ENCODE measurements at regions of chr20 and their contacts with region 1.

Region 1: DNA sequence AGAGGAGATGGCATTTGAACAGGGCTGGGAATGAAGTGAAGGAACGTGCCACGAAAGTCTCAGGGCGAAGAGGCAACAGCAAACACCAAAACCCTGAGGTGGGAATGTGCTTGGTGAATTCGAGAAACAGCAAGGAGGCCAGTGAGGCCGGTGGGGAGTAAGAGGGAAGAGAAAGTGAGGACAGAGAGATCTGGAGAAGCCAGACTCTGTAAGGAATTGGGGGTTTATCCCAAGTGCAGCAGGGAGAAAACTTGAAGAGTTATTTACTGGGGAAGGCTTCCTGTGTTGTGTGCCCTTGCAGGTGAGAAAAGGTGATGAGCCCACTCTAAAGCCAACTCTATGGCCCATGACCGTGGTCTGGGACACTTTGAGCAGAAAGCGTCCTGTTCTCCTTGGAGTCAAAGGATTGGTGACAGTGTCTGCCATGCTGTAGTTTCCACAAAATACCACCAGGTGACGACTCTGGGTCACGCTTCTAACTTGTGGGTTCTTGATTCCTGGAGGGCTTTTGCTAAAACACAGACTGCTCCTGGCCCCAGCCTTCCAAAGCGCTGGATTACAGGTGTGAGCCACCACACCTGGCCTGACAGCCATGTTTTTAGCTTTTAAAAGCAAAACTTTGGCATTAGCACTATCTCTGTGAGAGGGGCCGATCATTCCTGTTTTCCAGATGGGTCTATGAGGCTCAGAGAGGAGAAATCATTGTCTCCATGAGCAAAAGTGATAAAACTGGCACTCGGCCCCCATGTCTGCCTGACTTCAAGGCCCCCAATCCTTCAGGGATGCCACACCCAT is 18.0 kb upstream of the CSNK2A1 start:
- DNase-seq: peak in 5 of 9 donors; percentile 5 to 30 (median 17)
- ATAC-seq: peak; percentile 63
- H3K4me3 ChIP-seq: no peak overlapping the region
- H3K4me3 Mint-ChIP-seq: no peak overlapping the region
- H3K27ac ChIP-seq: no peak overlapping the region
- H3K27ac Mint-ChIP-seq: peak overlapping the region in 1 of 9 donors; percentile 8
- H3K4me1 ChIP-seq: no peaks in the 10 kb centered on the region
- H3K4me1 Mint-ChIP-seq: no peaks in the 10 kb centered on the region
- H3K27me3 ChIP-seq: no peaks in the 10 kb centered on the region
- H3K27me3 Mint-ChIP-seq: peaks cover 11 to 17% (median 15%) of the 10 kb centered on the region in 5 donors

Region 2: DNA sequence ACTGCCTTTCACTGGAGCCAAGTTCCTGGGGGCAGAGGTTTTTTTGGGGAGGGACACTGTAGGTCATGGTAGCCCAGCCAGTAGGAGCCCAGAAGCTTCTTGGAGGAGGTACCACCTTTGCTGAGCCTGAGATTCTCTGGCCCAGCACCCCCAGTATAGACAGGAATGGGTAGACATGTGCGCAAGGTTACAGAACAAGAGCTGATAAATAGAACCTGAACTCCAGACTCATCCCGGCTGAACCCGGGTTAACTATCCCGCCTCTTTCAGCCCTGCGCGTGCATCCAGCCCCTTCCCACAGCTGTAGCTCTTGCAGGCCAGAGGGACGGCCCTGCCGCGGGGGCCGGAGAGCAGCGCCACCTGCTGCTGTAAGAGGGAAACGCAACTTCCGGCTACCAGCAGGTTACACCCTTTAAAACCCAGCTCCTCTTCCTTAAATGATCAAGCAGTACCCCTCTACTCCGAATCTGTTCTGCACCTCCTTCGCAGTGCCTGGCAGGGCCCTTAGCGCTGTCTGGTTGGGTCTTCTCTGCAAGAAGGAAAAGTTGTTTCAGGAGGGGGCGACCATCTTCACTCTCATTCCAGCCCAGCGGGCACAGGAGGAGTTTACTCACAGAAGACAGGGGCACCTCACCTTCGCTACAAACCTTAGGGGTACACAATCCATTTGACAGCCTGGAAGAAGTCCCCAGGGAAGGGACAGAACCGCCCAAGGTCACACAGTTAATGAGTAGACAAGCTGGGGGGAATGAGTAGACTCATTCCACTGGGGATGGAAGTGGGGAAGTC is 83.9 kb after region 1 on chr20:
- CTCF ChIA-PET with region 1: no interaction called
- POLR2A ChIA-PET with region 1: no interaction called
- intact Hi-C with region 1: loop called in 1 of 2 experiments (anchors 1 kb)
- DNase-seq: peak; percentile 28 to 79 (median 51)
- ATAC-seq: peak; percentile 83
- H3K4me3 ChIP-seq: no peak overlapping the region
- H3K4me3 Mint-ChIP-seq: no peak overlapping the region
- H3K27ac ChIP-seq: no peak overlapping the region
- H3K27ac Mint-ChIP-seq: no peak overlapping the region
- H3K4me1 ChIP-seq: no peaks in the 10 kb centered on the region
- H3K4me1 Mint-ChIP-seq: peaks cover 0 to 18% (median 15%) of the 10 kb centered on the region in 7 donors
- H3K27me3 ChIP-seq: peaks cover 0 to 11% of the 10 kb centered on the region in 2 donors
- H3K27me3 Mint-ChIP-seq: peaks cover 17 to 24% (median 23%) of the 10 kb centered on the region in 5 donors

Region 3: DNA sequence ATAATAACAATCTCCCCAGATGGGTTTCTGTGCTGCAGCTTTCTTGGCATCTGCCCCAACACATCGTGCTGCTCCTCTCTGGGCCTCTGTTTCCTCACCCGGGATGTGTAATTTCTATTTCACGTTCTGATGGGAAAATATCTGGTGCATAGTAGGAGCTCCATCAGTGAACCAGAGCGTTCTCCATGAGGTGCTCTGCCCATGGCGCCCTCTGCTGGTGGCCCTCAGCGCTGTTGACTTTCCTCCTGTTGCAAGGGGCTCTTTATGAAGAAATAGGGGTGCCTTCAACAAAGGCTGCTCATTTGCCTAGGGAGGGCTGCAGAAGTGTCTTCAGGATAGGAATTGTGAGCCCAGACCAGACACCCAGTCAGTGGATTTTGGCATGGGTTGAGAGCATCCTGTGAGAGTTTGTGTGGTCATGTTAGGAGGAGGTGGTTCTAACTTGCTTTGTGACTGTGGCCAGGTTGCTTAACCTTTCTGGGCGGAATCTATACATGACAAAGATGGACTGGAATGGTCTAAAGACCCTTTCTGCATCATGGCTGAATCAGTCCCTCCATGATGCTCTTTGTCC is 105.8 kb after region 1 on chr20:
- CTCF ChIA-PET with region 1: no interaction called
- POLR2A ChIA-PET with region 1: no interaction called
- intact Hi-C with region 1: loop called in 1 of 2 experiments (anchors 1 kb)
- DNase-seq: peak in 2 of 9 donors; percentile 21 to 69
- ATAC-seq: peak; percentile 55
- H3K4me3 ChIP-seq: no peak overlapping the region
- H3K4me3 Mint-ChIP-seq: no peak overlapping the region
- H3K27ac ChIP-seq: no peak overlapping the region
- H3K27ac Mint-ChIP-seq: no peak overlapping the region
- H3K4me1 ChIP-seq: no peaks in the 10 kb centered on the region
- H3K4me1 Mint-ChIP-seq: peaks cover 0 to 13% (median 0%) of the 10 kb centered on the region in 7 donors
- H3K27me3 ChIP-seq: peaks cover 0 to 6% of the 10 kb centered on the region in 2 donors
- H3K27me3 Mint-ChIP-seq: peaks cover 60 to 73% (median 65%) of the 10 kb centered on the region in 5 donors

Region 4: GRCh38 chr20:739736-740135 is 178.1 kb after region 1 on chr20:
- CTCF ChIA-PET with region 1: no interaction called
- POLR2A ChIA-PET with region 1: no interaction called
- intact Hi-C with region 1: loop called (anchors 1 to 2 kb)
- DNase-seq: no peak
- ATAC-seq: no peak
- H3K4me3 ChIP-seq: no peak overlapping the region
- H3K4me3 Mint-ChIP-seq: no peak overlapping the region
- H3K27ac ChIP-seq: no peak overlapping the region
- H3K27ac Mint-ChIP-seq: no peak overlapping the region
- H3K4me1 ChIP-seq: no peaks in the 10 kb centered on the region
- H3K4me1 Mint-ChIP-seq: peaks cover 0 to 4% (median 0%) of the 10 kb centered on the region in 7 donors
- H3K27me3 ChIP-seq: no peaks in the 10 kb centered on the region
- H3K27me3 Mint-ChIP-seq: peaks cover 6 to 26% (median 22%) of the 10 kb centered on the region in 5 donors

Measured in naive thymus-derived CD4-positive, alpha-beta T cell (primary cell).